Right ventricle myocardium inferior (tissue), 1 donor: ENCODE measurements at regions of chr10 and their contacts with region 1.

Region 1: GRCh38 chr10:104231784-104232612 is at the start of gene CFAP43:
- DNase-seq: peak; percentile 99
- ATAC-seq: peak; percentile 100
- total RNA-seq, gene CFAP43: 0.19 TPM

Region 2: DNA sequence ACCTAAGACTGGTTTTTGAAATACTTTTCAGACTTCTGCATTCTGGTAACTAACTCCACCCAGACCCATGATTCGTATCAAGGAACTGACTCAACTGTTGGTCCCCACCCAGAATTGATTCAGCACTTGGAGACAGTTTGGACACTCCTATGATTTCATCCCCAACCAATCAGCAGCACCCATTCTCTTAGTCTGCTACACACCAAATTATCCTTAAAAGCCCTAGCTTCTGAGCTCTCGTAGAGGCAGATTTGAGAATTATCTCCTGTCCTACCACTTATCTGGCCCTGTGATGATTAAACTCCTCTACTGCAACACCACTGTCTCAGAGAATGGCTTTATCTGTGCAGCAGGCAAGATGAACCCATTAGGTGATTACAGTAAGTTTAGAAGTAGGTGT is 15.0 kb after region 1 on chr10:
- intact Hi-C with region 1: no loop called
- DNase-seq: no peak
- ATAC-seq: peak; percentile 62

Region 3: DNA sequence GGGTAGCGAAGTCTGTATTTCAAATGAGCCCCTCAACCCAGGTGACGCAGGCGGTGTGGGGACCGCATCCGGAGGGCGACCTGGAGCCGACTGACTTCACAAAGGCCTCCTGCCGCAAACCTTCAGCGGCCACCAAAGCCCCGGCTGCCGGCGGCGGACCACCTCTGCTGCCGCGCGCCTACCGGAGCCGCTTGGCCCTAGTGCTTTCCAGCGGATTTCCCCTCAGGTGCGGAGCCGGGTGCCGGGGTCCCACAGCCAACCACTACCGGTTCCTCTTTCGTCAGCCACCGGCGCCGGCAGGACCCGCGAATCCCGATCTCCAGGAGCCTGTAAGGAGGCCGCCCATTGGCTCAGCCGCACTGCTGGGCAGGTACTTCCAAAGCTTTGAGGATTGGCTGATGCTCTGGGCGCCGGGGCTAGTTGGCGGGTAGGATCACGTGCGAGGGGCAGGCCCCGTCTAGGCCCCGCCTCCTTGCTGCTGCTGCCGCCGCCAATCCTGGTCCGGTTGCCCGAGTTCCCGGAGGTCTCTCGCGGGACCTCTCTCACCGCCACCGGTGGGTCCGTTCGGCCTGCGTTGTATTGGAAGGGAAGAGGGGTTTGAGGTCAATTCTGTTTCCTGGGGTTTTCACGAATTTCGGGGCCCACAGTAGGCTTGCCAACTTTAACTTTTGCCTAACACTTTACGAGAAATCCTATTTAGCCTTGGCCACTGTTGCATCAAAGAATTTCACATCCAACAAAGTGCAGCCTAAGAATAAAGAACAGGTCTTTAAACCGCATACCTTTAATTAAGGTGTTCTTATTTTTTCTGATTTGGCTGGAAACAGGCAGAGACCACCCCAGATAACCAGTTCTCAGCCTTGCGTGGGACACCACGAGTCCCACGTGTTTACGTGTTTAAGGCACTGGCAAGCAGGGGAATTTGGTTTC is 37.0 kb after region 1 on chr10 and contains the start of gene GSTO2:
- intact Hi-C with region 1: loop called (anchors 2 kb)
- DNase-seq: peak; percentile 100
- ATAC-seq: peak; percentile 100
- total RNA-seq, gene GSTO2: 0.70 TPM

Region 4: DNA sequence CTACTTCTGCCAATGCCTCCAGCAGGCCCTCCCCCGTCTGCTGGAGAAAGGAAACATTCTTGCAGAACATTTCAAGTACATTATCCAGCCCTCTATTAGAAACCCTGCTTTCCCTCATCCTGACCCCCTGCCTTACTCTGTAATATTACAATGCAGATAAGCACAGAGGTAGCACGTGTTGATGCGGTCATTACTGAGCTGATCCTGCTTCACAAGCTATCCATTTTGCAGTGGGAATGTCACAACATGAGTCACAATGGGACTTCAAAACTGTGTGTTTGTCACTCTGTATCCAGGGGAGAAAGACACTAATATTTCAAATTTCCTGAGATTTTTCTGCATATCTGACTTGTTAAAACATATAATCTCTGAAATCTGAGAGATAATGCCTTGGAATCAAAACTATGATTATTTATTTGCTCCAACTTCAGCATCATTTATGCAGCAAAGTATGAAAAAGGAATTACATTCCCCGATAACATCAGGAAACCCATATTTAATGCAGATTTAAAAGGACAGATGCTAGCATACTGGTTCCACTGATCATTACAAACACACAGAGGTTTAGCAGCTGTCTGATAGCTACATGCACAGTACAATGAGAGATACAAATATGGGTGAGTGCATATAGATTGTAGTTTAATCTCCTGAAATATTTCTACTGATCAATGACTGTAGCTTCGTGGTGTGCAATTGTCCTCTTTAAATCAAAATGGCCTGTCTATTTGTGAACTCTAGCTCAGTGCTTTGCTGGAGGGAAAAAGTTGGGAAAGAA is 648.8 kb after region 1 on chr10:
- intact Hi-C with region 1: no loop called
- DNase-seq: peak; percentile 66
- ATAC-seq: no peak